ENCODE measurements at regions of chr9 and their contacts with region 1.

Region 1: GRCh38 chr9:101530077-101530711 is 3.5 kb upstream of the RNF20 start:
- DNase-seq: peak; percentile 62 to 83 (median 78)
- ATAC-seq: peak; percentile 73
- H3K4me3 ChIP-seq: no peak overlapping the region
- H3K27ac ChIP-seq: no peak overlapping the region
- H3K4me1 ChIP-seq: peaks cover 0 to 4% of the 10 kb centered on the region in 2 experiments; a peak in 1 of 5 replicates
- H3K27me3 ChIP-seq: peaks cover 0 to 3% of the 10 kb centered on the region in 2 experiments; a peak in 1 of 5 replicates
- CTCF ChIP-seq: peak; percentile 74 to 84 (median 82)
- EP300 ChIP-seq: no peak
- POLR2A ChIP-seq: no peak
- RAD21 ChIP-seq: peak; percentile 86 to 87

Region 2: DNA sequence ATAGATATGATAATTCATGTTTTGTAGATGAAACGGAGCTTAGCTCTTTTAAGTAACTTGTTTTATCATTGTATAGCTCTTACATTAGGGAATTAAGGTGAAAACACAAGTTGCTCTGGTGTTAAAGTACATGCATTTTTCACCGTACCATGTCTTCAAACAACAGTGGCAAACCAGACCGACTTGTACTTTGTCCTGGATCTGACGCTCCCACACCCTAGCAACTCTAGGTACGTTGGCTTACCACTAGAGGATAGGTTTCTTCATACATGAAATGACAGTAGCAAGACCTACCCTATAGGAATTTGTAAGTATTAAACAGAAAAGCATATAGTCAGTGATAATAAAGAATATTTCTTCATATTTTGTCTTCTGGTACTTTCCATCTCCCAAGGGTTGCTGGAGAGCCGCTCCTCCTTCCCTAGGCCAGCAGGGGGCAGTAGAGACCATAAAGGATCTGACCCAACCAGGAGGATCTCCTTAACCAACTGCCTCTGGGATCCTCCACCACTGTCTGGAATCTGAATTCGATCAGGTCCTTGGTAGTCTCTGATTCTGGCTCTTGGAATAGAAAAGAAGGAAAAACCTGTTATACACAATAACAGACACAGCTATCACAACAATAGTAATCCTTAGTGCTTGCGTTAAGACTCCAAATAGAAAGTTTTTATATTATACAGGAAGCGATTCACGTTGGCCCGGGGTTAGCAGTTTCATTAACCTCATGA is 815.7 kb before region 1 on chr9:
- CTCF ChIA-PET with region 1: no interaction called
- POLR2A ChIA-PET with region 1: no interaction called
- in situ Hi-C with region 1: loop called (anchors 25 kb)
- intact Hi-C with region 1: loop called (anchors 10 kb)
- DNase-seq: peak; percentile 72 to 81 (median 76)
- ATAC-seq: peak; percentile 97
- H3K4me3 ChIP-seq: no peak overlapping the region
- H3K27ac ChIP-seq: no peak overlapping the region
- H3K4me1 ChIP-seq: no peaks in the 10 kb centered on the region
- H3K27me3 ChIP-seq: no peaks in the 10 kb centered on the region
- CTCF ChIP-seq: peak; percentile 64 to 85 (median 79)
- EP300 ChIP-seq: no peak
- POLR2A ChIP-seq: no peak
- RAD21 ChIP-seq: peak; percentile 74 to 75

Region 3: GRCh38 chr9:101333926-101334702 is 196.1 kb before region 1 on chr9:
- CTCF ChIA-PET with region 1: no interaction called
- POLR2A ChIA-PET with region 1: no interaction called
- in situ Hi-C with region 1: no loop called
- intact Hi-C with region 1: loop called (anchors 10 kb)
- DNase-seq: no peak
- ATAC-seq: peak; percentile 58
- H3K4me3 ChIP-seq: no peak overlapping the region
- H3K27ac ChIP-seq: no peak overlapping the region
- H3K4me1 ChIP-seq: peaks cover 0 to 5% of the 10 kb centered on the region in 2 experiments; a peak in 4 of 5 replicates
- H3K27me3 ChIP-seq: no peaks in the 10 kb centered on the region
- CTCF ChIP-seq: no peak
- EP300 ChIP-seq: no peak
- POLR2A ChIP-seq: no peak
- RAD21 ChIP-seq: no peak

Region 4: DNA sequence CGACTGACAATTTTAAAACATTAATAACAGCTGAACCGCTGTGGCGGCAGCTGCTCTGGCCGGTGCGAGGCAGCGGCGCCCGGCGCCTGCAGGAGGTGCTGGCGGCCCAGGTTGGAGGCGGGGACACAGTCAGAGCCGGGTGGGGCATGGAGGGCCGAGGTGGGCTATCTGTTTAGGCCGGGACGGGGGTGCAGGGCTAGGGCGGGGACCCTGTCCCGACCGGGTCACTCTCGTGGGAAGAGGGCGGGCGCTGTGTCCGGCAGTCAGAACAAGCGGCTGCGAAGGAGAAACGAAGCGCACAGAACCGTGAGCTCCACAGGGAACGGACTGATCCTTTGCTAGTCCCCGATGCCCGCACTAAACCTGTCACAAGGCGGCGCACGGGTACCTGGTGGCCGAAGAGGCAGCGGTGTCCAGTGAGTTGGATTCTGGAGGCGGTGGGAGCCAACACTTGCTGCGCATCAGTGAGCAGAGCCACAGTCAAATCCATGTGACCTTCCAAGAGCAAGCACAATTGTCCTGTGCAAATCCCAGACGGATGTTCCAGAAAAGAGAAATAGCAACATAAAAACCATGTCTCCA is 81.0 kb before region 1 on chr9:
- CTCF ChIA-PET with region 1: interaction called, 15 read pairs
- POLR2A ChIA-PET with region 1: interaction called, 3 read pairs
- in situ Hi-C with region 1: loop called (anchors 5 kb)
- intact Hi-C with region 1: loop called (anchors 1 kb)
- DNase-seq: peak; percentile 72 to 86 (median 78)
- ATAC-seq: peak; percentile 100
- H3K4me3 ChIP-seq: peak overlapping the region; percentile 67
- H3K27ac ChIP-seq: 0 out of 3 replicates have a peak overlapping the region, but pooled peaks have one; percentile 26
- H3K4me1 ChIP-seq: peaks cover 0 to 6% of the 10 kb centered on the region in 2 experiments; a peak in 1 of 5 replicates
- H3K27me3 ChIP-seq: no peaks in the 10 kb centered on the region
- CTCF ChIP-seq: peak; percentile 65 to 85 (median 80)
- EP300 ChIP-seq: no peak
- POLR2A ChIP-seq: no peak
- RAD21 ChIP-seq: peak; percentile 63 to 66

Region 5: GRCh38 chr9:101465392-101465791 is 64.8 kb before region 1 on chr9:
- CTCF ChIA-PET with region 1: no interaction called
- POLR2A ChIA-PET with region 1: no interaction called
- in situ Hi-C with region 1: no loop called
- intact Hi-C with region 1: loop called (anchors 1 kb)
- DNase-seq: peak in 3 of 4 experiments; percentile 15 to 81 (median 57)
- ATAC-seq: peak; percentile 95
- H3K4me3 ChIP-seq: no peak overlapping the region
- H3K27ac ChIP-seq: no peak overlapping the region
- H3K4me1 ChIP-seq: peaks cover 0 to 15% of the 10 kb centered on the region in 2 experiments; a peak in 3 of 5 replicates
- H3K27me3 ChIP-seq: no peaks in the 10 kb centered on the region
- CTCF ChIP-seq: peak; percentile 59 to 78 (median 69)
- EP300 ChIP-seq: peak; percentile 8; the same call in 1 of the 2 replicates
- POLR2A ChIP-seq: no peak
- RAD21 ChIP-seq: peak; percentile 28 to 69; a peak in 3 of 4 replicates

Region 6: GRCh38 chr9:101498323-101498722 is 31.9 kb before region 1 on chr9:
- CTCF ChIA-PET with region 1: no interaction called
- POLR2A ChIA-PET with region 1: no interaction called
- in situ Hi-C with region 1: no loop called
- intact Hi-C with region 1: no loop called
- DNase-seq: no peak
- ATAC-seq: no peak
- H3K4me3 ChIP-seq: no peak overlapping the region
- H3K27ac ChIP-seq: no peak overlapping the region
- H3K4me1 ChIP-seq: no peaks in the 10 kb centered on the region
- H3K27me3 ChIP-seq: no peaks in the 10 kb centered on the region
- CTCF ChIP-seq: no peak
- EP300 ChIP-seq: no peak
- POLR2A ChIP-seq: no peak
- RAD21 ChIP-seq: no peak